H1 (cell line): ENCODE measurements at regions of chr12 and their contacts with region 1.

Region 1: GRCh38 chr12:32755654-32756475 is at the start of gene YARS2:
- DNase-seq: peak; percentile 87 to 90
- H3K4me3 ChIP-seq: peak within 1 kb of the TSS; percentile 77 to 100 (median 98)
- H3K27ac ChIP-seq: peak within 1 kb of the TSS; percentile 92
- H3K4me1 ChIP-seq: peaks cover 0 to 3% (median 1%) of the 10 kb centered on the region in 4 experiments; a peak in 2 of 7 replicates
- H3K27me3 ChIP-seq: no peaks in the 10 kb centered on the region; a peak in 1 of 7 replicates
- CTCF ChIP-seq: peak; percentile 35 to 89 (median 76)
- EP300 ChIP-seq: no peak
- POLR2A ChIP-seq: peak; percentile 94 to 100
- RAD21 ChIP-seq: peak; percentile 97 to 99
- total RNA-seq, gene YARS2: 41.0 and 41.4 TPM in 2 replicates

Region 2: DNA sequence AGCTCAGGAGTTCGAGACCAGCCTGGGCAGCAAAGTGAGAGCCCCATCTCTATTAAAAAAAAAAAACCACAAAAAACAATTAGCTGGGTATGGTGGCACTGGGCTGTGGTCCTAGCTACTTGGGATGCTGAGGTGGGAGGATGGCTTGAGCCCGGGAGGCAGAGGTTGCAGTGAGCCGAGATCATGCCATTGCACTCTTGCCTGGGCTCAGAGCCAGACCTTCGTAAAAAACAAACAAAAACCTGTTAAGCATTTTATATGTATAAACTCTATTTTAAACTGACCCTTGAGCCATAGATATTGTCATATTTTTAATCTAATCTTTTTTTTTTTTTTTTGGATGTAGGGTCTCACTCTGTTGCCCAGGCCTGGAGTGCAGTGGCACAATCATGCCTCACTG is 41.1 kb before region 1 on chr12:
- CTCF ChIA-PET with region 1: no interaction called
- POLR2A ChIA-PET with region 1: no interaction called
- DNase-seq: no peak
- H3K4me3 ChIP-seq: no peak overlapping the region
- H3K27ac ChIP-seq: no peak overlapping the region
- H3K4me1 ChIP-seq: no peaks in the 10 kb centered on the region
- H3K27me3 ChIP-seq: no peaks in the 10 kb centered on the region
- CTCF ChIP-seq: no peak
- EP300 ChIP-seq: no peak
- POLR2A ChIP-seq: no peak
- RAD21 ChIP-seq: no peak

Region 3: DNA sequence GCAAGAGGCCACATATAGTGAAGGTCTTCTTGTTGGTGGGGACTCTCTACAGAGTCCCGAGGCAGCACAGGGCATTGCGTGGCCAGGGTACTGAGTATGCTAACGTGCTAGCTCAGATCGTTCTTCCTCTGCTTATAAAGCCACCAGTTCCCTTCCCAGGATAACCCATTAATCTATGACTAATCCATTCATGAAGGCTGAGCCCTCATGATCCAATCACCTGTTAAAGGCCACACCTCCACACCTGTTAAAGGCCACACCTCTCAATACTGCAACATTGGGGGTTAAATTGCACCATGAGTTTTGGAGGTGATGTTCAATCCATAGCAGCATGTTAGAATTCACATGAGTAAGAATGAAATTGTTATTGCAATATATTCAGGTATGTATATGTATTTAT is 12.7 kb after region 1 on chr12:
- CTCF ChIA-PET with region 1: interaction called, 30 read pairs
- POLR2A ChIA-PET with region 1: interaction called, 8 read pairs
- DNase-seq: no peak
- H3K4me3 ChIP-seq: no peak overlapping the region
- H3K27ac ChIP-seq: no peak overlapping the region
- H3K4me1 ChIP-seq: no peaks in the 10 kb centered on the region
- H3K27me3 ChIP-seq: no peaks in the 10 kb centered on the region
- CTCF ChIP-seq: no peak
- EP300 ChIP-seq: no peak
- POLR2A ChIP-seq: no peak
- RAD21 ChIP-seq: no peak

Region 4: DNA sequence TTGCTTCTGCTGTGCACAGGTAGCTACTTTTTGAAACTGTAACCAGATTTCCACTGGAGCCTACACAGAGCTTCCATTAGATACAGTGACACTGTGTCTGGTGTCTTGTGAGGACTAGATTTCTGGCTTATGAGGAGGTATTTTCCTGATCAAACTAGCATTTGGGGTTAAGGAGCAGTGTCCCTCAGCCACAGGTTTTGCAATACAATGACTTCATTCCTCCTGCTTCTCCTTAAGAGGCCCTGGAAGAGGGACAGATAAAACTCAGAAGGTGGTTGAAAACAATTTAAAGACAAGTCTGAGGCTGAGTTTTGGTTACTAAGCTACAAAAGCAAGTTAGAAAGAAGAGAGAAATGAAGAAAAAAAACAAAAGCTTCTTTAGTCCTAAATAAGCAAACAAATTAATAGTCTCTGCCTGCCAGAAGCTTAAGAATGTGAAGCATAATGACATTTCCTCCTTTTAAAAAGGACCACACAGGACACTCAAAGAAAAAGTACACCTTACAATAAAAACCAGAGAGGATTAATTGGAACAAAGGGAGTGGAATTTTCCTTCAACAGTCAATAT is 87.7 kb after region 1 on chr12:
- CTCF ChIA-PET with region 1: interaction called, 10 read pairs
- POLR2A ChIA-PET with region 1: interaction called, 5 read pairs
- DNase-seq: no peak
- H3K4me3 ChIP-seq: peak overlapping the region in 1 of 4 experiments; percentile 16; a peak in 1 of 8 replicates
- H3K27ac ChIP-seq: peak overlapping the region; percentile 53
- H3K4me1 ChIP-seq: peaks cover 0 to 8% (median 5%) of the 10 kb centered on the region in 4 experiments; a peak in 6 of 7 replicates
- H3K27me3 ChIP-seq: no peaks in the 10 kb centered on the region
- CTCF ChIP-seq: no peak
- EP300 ChIP-seq: no peak
- POLR2A ChIP-seq: no peak
- RAD21 ChIP-seq: no peak

Region 5: DNA sequence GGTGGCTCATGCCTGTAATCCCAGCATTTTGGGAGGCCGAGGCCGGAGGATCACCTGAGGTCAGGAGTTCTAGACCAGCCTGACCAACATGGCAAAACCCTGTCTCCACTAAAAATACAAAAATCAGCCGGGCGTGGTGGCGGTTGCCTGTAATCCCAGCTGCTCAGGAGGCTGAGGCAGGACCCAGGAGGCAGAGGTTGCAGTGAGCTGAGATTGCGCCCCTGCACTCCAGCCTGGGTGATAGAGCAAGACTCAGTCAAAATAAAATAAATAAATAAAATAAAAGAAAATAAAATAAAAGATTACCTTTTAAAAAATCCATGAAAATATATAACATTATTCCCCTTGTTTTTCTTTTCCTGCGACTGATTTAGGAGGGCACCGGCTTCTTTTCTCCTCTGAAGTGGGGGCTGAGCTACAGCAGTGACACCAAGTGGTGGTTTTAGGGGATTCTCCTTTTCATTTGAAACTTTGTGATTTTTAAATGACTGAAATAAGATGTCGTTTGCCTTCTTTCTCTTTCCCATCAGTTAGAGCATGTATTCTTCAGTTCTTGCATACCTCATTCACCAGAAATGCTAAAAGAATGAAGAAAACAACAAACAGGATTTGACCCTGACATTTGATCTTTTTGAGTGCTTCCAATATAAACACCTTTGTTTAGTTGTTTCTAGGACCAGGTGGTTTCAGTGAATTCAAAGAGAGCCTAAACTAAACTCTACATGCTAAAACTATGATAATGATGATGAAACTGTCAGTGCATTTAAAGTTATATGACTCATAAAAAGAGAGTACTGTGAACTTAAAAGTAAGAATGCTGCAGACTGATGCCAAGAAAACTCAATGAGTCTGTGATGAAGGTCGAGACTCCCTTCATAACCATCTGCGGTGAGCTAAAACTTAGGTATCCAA is 163.3 kb after region 1 on chr12:
- CTCF ChIA-PET with region 1: interaction called, 54 read pairs
- POLR2A ChIA-PET with region 1: interaction called, 9 read pairs
- DNase-seq: no peak
- H3K4me3 ChIP-seq: no peak overlapping the region
- H3K27ac ChIP-seq: no peak overlapping the region
- H3K4me1 ChIP-seq: no peaks in the 10 kb centered on the region
- H3K27me3 ChIP-seq: no peaks in the 10 kb centered on the region
- CTCF ChIP-seq: peak; percentile 7 to 65 (median 55)
- EP300 ChIP-seq: no peak
- POLR2A ChIP-seq: no peak
- RAD21 ChIP-seq: peak; percentile 85 to 87

Region 6: GRCh38 chr12:32947206-32948067 is 191.6 kb after region 1 on chr12:
- CTCF ChIA-PET with region 1: interaction called, 13 read pairs
- POLR2A ChIA-PET with region 1: interaction called, 3 read pairs
- DNase-seq: no peak
- H3K4me3 ChIP-seq: no peak overlapping the region
- H3K27ac ChIP-seq: no peak overlapping the region
- H3K4me1 ChIP-seq: no peaks in the 10 kb centered on the region
- H3K27me3 ChIP-seq: no peaks in the 10 kb centered on the region
- CTCF ChIP-seq: peak in 2 of 3 experiments; percentile 12 to 35; a peak in 2 of 4 replicates
- EP300 ChIP-seq: no peak
- POLR2A ChIP-seq: no peak
- RAD21 ChIP-seq: peak; percentile 77